Lower leg skin (tissue), 4 donors: ENCODE measurements at regions of chr7 and their contacts with region 1.

Region 1: GRCh38 chr7:45494885-45495284 is 79.3 kb upstream of the ADCY1 start:
- DNase-seq: no peak
- H3K4me3 ChIP-seq: no peak overlapping the region
- CTCF ChIP-seq: no peak
- POLR2A ChIP-seq: no peak

Region 2: DNA sequence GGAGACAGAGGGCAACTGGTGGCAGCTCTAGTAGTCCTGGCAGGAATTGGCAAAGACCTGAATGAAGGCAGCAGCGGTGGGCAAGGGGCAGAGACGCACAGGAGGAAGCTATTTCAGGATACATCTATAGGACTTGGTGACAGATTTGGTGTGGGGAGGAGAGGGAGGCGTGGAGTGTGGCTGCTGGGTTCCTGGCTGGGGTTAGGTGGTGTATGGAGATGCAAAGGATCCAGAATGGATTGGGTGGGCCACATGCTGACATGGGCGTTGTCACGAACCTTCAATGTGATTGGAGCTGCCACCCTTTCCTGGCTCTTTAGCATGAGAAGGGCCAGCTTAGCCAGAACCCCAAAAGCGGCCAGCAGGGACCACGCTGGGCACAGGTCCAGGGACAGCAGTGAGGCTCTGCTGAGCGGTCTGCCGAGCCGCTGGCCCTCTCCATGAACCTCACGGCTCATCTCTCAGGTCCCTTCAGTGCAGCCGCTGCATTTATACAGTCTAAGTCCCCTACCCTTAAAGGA is 69.1 kb after region 1 on chr7:
- intact Hi-C with region 1: loop called (anchors 10 kb)
- DNase-seq: peak in 1 of 2 donors; percentile 76
- H3K4me3 ChIP-seq: no peak overlapping the region
- CTCF ChIP-seq: no peak
- POLR2A ChIP-seq: no peak